ENCODE measurements at regions of chr22 and their contacts with region 1.

Region 1: DNA sequence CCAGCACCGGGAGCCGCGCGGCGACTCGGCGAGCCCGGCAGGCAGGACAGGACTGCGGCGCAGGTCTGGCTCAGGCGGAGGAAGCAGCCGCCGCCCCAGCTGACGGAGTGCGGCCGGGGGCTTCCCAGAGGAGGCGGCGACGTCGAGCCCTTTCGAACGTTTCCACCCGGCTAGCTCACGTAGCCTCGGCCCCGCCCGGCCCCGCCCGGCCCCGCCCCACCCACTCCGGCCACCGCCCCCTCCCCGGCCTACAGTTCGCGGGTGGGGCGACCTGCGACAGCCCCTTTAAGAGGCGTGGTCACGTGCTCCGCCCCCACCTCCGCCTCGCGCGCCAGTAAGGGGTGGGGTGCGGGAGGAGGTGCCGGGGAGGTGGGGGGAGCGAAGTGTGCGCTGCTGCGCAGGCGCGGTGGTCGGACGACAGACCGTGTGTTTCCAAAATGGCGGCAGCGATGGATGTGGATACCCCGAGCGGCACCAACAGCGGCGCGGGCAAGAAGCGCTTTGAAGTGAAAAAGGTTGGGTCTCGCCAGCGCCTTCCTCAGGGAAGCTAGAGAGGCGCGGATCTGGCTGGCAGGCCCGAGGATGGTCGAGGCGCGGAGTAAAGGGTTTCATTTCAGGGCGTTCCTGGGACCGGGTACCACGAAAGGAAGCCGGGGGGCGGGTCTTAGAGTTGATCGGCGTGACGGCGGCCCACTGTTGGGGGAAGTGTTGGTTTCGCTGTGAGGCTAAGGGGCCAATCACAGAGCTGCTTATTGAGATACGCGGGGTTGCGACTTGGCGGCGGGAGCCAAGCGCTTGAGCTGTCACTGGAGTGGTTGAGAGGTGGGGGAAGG is at the start of gene RBX1:
- DNase-seq: peak; percentile 98
- ATAC-seq: peak; percentile 95
- H3K4me3 ChIP-seq: peak within 1 kb of the TSS; percentile 87
- H3K27ac ChIP-seq: peak within 1 kb of the TSS; percentile 97
- H3K4me1 ChIP-seq: peaks cover 2% of the 10 kb centered on the region; the same call in 1 of the 2 replicates
- H3K27me3 ChIP-seq: no peaks in the 10 kb centered on the region
- CTCF ChIP-seq: no peak
- POLR2A ChIP-seq: peak; percentile 92
- RAD21 ChIP-seq: no peak
- total RNA-seq, gene RBX1: 63.3 and 72.4 TPM in 2 replicates

Region 2: DNA sequence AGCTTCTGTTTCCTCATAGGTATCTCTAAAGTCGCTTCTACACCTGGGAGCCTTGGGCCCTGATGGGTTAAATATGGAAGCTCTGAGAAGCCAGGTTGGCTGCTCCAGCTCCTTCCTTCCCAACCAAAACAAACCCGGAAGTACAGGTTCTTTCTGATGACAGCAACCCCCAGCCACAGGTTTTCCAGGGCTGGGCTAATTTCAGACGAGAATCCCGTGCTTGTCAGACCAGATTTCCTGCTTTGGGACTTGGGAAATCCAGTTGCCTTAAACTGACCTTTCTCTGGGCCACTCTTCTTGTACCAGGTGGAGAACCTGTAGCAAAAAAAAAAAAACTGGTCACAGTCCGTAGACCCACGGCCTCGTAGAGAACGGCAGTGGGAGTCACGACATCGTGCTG is 51.9 kb after region 1 on chr22:
- CTCF ChIA-PET with region 1: no interaction called
- POLR2A ChIA-PET with region 1: no interaction called
- dilution Hi-C with region 1: no loop called
- in situ Hi-C with region 1: no loop called
- intact Hi-C with region 1: no loop called
- DNase-seq: no peak
- ATAC-seq: no peak
- H3K4me3 ChIP-seq: no peak overlapping the region
- H3K27ac ChIP-seq: no peak overlapping the region
- H3K4me1 ChIP-seq: peaks cover 4% of the 10 kb centered on the region; the same call in 1 of the 2 replicates
- H3K27me3 ChIP-seq: no peaks in the 10 kb centered on the region; the same call in 1 of the 2 replicates
- CTCF ChIP-seq: no peak
- POLR2A ChIP-seq: no peak
- RAD21 ChIP-seq: no peak

Region 3: GRCh38 chr22:41022470-41023298 is 71.5 kb after region 1 on chr22:
- CTCF ChIA-PET with region 1: no interaction called
- POLR2A ChIA-PET with region 1: interaction called, 3 read pairs
- dilution Hi-C with region 1: no loop called
- in situ Hi-C with region 1: no loop called
- intact Hi-C with region 1: loop called (anchors 5 kb)
- DNase-seq: peak; percentile 76
- ATAC-seq: peak; percentile 87
- H3K4me3 ChIP-seq: peak overlapping the region; percentile 54
- H3K27ac ChIP-seq: peak overlapping the region; percentile 79
- H3K4me1 ChIP-seq: peaks cover 9% of the 10 kb centered on the region
- H3K27me3 ChIP-seq: no peaks in the 10 kb centered on the region
- CTCF ChIP-seq: no peak
- POLR2A ChIP-seq: no peak
- RAD21 ChIP-seq: no peak

Region 4: GRCh38 chr22:41085842-41086241 is 134.7 kb after region 1 on chr22:
- CTCF ChIA-PET with region 1: no interaction called
- POLR2A ChIA-PET with region 1: no interaction called
- dilution Hi-C with region 1: no loop called
- in situ Hi-C with region 1: loop called (anchors 10 kb)
- intact Hi-C with region 1: loop called (anchors 1 kb)
- DNase-seq: no peak
- ATAC-seq: no peak
- H3K4me3 ChIP-seq: no peak overlapping the region
- H3K27ac ChIP-seq: no peak overlapping the region
- H3K4me1 ChIP-seq: no peaks in the 10 kb centered on the region; the same call in 1 of the 2 replicates
- H3K27me3 ChIP-seq: no peaks in the 10 kb centered on the region
- CTCF ChIP-seq: no peak
- POLR2A ChIP-seq: no peak
- RAD21 ChIP-seq: no peak

Region 5: DNA sequence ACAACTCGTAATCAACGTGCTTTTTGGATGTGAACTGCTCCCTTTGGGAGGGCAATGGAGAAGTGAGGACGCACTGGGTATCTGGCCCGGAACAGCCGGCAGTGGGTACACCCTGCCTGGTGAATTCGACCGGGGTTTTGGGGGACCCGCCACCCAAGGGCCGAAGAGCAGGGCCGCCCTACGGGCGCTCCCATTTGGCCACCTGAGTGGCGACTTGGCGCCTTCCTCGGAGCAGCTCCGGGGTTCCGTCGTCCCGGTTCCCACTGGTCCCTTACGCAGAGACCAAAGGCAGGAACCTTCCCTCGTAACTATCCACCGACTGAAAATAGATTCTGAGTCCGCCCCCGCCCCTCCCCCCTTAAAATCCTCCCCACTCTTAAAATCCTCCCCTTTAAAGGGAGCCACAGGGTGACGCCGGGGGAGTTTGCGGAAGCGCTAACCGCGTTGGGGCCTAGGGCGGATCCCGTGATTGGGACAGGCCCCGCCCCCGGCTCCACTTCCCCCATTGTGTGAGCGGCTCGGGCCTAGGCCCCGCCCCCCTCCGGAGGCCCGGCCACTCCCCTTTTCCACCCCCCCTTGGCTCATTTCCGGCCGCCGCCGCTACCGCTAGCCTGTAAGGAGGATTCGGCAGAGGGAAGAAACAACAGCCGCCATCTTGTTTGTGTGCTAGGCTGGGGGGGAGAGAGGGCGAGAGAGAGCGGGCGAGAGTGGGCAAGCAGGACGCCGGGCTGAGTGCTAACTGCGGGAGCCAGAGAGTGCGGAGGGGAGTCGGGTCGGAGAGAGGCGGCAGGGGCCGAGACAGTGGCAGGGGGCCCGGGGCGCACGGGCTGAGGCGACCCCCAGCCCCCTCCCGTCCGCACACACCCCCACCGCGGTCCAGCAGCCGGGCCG is 140.2 kb after region 1 on chr22:
- CTCF ChIA-PET with region 1: interaction called, 4 read pairs
- POLR2A ChIA-PET with region 1: interaction called, 9 read pairs
- dilution Hi-C with region 1: no loop called
- in situ Hi-C with region 1: loop called (anchors 10 kb)
- intact Hi-C with region 1: loop called (anchors 1 kb)
- DNase-seq: peak; percentile 98
- ATAC-seq: peak; percentile 93
- H3K4me3 ChIP-seq: peak overlapping the region; percentile 84
- H3K27ac ChIP-seq: peak overlapping the region; percentile 97
- H3K4me1 ChIP-seq: peaks cover 3% of the 10 kb centered on the region
- H3K27me3 ChIP-seq: no peaks in the 10 kb centered on the region
- CTCF ChIP-seq: no peak
- POLR2A ChIP-seq: peak; percentile 77
- RAD21 ChIP-seq: 0 out of 2 replicates have a peak, but pooled peaks have one; percentile 25